ENCODE measurements at regions of chr5 and their contacts with region 1.

Region 1: GRCh38 chr5:141691867-141692532 is 10.0 kb upstream of the ARAP3 start:
- ATAC-seq: peak; percentile 68 to 96 (median 74)
- H3K4me3 ChIP-seq: peak overlapping the region; percentile 16 to 26 (median 21)
- H3K27ac ChIP-seq: no peak overlapping the region
- H3K4me1 ChIP-seq: peaks cover 33% of the 10 kb centered on the region in 2 donors

Region 2: GRCh38 chr5:141524604-141525597 is 167.1 kb before region 1 on chr5:
- in situ Hi-C with region 1: no loop called
- ATAC-seq: peak; percentile 48 to 93 (median 85)
- H3K4me3 ChIP-seq: no peak overlapping the region
- H3K27ac ChIP-seq: no peak overlapping the region
- H3K4me1 ChIP-seq: peaks cover 23 to 27% of the 10 kb centered on the region in 2 donors

Region 3: GRCh38 chr5:141878711-141879425 is 186.9 kb after region 1 on chr5:
- in situ Hi-C with region 1: loop called in 2 of 9 experiments (anchors 10 to 25 kb)
- ATAC-seq: peak; percentile 58 to 78 (median 60)
- H3K4me3 ChIP-seq: peak overlapping the region; percentile 59 to 98 (median 89)
- H3K27ac ChIP-seq: peak overlapping the region; percentile 87 to 96
- H3K4me1 ChIP-seq: peaks cover 46 to 55% of the 10 kb centered on the region in 2 donors

Region 4: GRCh38 chr5:141923448-141924352 is 231.7 kb after region 1 on chr5 and contains the start of gene DELE1:
- in situ Hi-C with region 1: loop called in 4 of 9 experiments (anchors 25 kb)
- ATAC-seq: peak; percentile 93 to 97 (median 95)
- H3K4me3 ChIP-seq: peak within 1 kb of the TSS; percentile 43 to 70 (median 50)
- H3K27ac ChIP-seq: peak within 1 kb of the TSS; percentile 92 to 96
- H3K4me1 ChIP-seq: peaks cover 12 to 13% of the 10 kb centered on the region in 2 donors
- total RNA-seq, gene DELE1: 26.9 to 78.7 (median 39.9) TPM

Region 5: GRCh38 chr5:141940695-141941271 is 248.8 kb after region 1 on chr5:
- in situ Hi-C with region 1: loop called in 3 of 9 experiments (anchors 25 kb)
- ATAC-seq: peak in 7 of 8 experiments; percentile 6 to 77 (median 24)
- H3K4me3 ChIP-seq: no peak overlapping the region
- H3K27ac ChIP-seq: no peak overlapping the region
- H3K4me1 ChIP-seq: peaks cover 2 to 3% of the 10 kb centered on the region in 2 donors

Region 6: GRCh38 chr5:141951332-141951781 is 259.4 kb after region 1 on chr5:
- in situ Hi-C with region 1: loop called in 5 of 9 experiments (anchors 10 to 25 kb)
- ATAC-seq: peak in 6 of 8 experiments; percentile 36 to 70 (median 51)
- H3K4me3 ChIP-seq: no peak overlapping the region
- H3K27ac ChIP-seq: no peak overlapping the region
- H3K4me1 ChIP-seq: peaks cover 0 to 2% of the 10 kb centered on the region in 2 donors

Region 7: DNA sequence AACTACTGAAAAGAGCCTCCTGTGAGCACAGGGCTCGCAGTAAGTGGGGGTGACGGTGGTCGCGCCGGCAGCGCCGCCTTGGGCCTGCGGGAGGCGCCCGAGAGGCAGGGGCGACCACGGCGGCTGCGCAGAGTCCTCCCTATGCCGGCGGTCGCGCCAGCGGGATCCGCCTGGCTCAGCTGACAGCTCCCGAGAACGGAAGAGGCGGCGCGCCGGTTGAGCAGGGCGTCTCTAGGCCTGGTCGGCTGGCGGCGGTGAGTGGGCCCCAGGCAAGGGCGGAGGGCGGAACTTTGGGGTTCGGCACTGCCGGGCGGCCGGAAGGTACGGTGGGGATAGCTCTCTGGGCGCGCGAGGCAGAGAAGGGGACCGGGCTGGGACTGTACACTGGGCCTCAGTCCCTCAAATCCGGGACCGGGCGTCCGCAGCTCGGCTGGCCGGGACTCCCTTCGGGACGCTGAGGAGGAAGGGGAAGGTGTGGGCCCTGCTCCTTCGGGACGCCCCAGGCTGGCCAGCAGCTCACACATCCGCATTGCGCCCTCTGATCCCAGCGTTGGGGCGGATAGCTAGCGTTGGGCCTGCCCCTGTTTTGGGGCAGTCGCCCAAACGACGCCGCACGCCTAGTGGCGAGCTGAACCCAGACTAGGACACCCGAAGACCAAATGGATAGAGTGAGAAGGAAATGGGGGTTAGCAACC is 277.1 kb after region 1 on chr5 and contains the start of gene RNF14:
- in situ Hi-C with region 1: loop called in 2 of 9 experiments (anchors 10 to 25 kb)
- ATAC-seq: peak; percentile 88 to 99 (median 98)
- H3K4me3 ChIP-seq: peak within 1 kb of the TSS; percentile 47 to 74 (median 67)
- H3K27ac ChIP-seq: peak within 1 kb of the TSS; percentile 59 to 89
- H3K4me1 ChIP-seq: peaks cover 10 to 19% of the 10 kb centered on the region in 2 donors
- total RNA-seq, gene RNF14: 28.8 to 84.2 (median 51.6) TPM

Measured in motor neuron (in vitro differentiated cells).